Activated T-helper 1 cell treated with anti-CD3 and anti-CD28 coated beads, Interleukin-12 subunit alpha, Interleukin-12 subunit beta, Interleukin-2, Interleukin-4 antibody, amounts not matched to agents 30 ng/mL and 10 ng/mL and 1 ng/mL, durations not matched to agents 14 hours and 24 hours and 36 hours (primary cell): ENCODE measurements at regions of chr15 and their contacts with region 1.

Region 1: DNA sequence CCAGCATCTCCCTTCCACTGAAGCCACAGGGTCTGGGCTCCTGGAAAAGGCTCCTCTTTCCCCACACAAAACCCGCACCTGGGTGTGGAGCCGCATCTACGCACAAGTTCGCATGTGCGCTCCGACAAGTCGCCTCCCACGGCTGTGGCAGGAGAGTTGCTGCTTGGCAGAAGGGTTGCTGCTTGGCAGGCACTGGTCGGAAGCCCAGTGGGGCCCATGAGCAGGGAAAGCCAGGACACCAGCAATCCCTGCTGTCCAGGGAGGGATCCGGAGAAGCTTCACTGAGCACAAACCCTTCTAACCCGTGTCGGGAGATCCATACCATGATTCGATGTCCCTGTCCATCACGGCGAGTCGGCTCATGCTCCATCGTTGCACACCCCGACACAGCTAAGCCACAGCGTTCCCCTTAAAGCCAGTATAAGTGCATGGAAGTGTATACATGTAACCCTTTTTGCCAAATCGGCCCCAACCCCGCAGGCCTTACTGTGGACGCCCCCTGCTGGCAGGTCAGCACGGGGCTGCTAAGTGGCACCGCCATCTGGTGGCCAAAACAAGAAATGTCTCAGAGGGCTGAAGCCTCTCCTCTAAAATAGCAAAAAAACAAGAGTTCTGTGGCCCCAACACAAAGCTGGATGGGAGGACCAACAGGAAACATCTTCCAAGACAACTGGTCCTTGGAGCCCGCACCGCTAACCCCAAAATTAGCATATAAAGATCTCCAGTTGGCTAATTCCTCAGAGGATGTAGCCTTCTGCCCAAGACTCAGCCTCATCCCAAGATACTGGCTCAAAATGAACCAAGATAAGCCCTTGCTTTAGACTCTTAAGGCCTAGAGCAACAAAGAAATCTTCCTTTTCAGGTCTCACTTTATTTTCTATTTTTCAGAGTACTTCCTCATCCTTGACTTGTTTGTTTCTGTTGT is 8.3 kb downstream of the ANKRD63 start:
- DNase-seq: peak; percentile 83
- H3K4me3 Mint-ChIP-seq: no peak overlapping the region
- H3K27ac Mint-ChIP-seq: no peak overlapping the region
- H3K4me1 Mint-ChIP-seq: peaks cover 5% of the 10 kb centered on the region
- H3K27me3 Mint-ChIP-seq: peaks cover 31% of the 10 kb centered on the region

Region 2: GRCh38 chr15:39887832-39888231 is 386.8 kb before region 1 on chr15:
- intact Hi-C with region 1: loop called (anchors 5 kb)
- DNase-seq: no peak
- H3K4me3 Mint-ChIP-seq: no peak overlapping the region
- H3K27ac Mint-ChIP-seq: no peak overlapping the region
- H3K4me1 Mint-ChIP-seq: no peaks in the 10 kb centered on the region
- H3K27me3 Mint-ChIP-seq: peaks cover 13% of the 10 kb centered on the region

Region 3: GRCh38 chr15:40038638-40039543 is 235.7 kb before region 1 on chr15 and contains the start of gene SRP14:
- intact Hi-C with region 1: loop called (anchors 1 kb)
- DNase-seq: peak; percentile 88
- H3K4me3 Mint-ChIP-seq: peak within 1 kb of the TSS; percentile 100
- H3K27ac Mint-ChIP-seq: peak within 1 kb of the TSS; percentile 98
- H3K4me1 Mint-ChIP-seq: peaks cover 44% of the 10 kb centered on the region
- H3K27me3 Mint-ChIP-seq: no peaks in the 10 kb centered on the region
- total RNA-seq, gene SRP14: 144 and 147 TPM in 2 replicates

Region 4: DNA sequence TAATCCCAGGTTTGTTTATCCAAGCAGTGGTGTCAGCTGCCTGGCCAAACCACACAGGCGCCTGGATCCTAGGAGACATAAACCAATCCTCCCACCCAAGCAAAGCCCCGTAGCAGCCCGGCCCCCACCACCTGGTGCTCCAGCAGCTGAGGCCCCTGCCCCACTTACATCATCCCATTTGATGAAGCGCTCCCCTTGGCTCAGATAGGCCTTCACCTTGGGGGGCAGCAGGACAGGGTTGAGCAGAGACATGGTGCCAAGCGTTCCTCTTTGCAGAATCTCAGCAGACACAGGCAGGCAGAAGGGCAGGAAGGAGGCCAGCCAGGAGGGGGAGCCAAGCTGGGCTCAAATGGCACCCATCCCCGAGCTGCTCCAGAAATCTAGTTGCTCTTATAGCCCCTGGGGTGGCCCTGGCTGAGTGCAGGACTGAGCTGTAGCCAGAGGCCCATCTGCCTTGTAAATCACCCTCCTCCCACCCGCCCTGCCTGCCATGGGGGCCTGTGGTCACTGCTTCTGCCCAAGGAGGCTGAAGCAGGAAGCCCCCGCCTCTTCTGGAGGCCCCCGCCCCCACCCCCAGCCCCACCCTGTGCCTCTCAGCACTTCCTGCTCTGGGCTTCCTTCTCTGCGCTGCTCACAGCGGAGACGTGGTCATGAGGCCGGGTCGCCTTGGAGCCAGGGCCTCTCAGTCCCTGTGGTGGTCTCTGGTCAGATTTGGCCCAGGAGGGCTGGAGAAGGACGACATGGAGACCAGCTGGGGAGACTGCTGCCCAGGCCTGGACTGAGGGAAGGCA is 33.0 kb after region 1 on chr15 and contains the start of gene PLCB2:
- intact Hi-C with region 1: loop called (anchors 1 kb)
- DNase-seq: peak; percentile 62
- H3K4me3 Mint-ChIP-seq: peak within 1 kb of the TSS; percentile 92
- H3K27ac Mint-ChIP-seq: peak within 1 kb of the TSS; percentile 98
- H3K4me1 Mint-ChIP-seq: peaks cover 37% of the 10 kb centered on the region
- H3K27me3 Mint-ChIP-seq: peaks cover 16% of the 10 kb centered on the region
- total RNA-seq, gene PLCB2: 88.5 and 89.0 TPM in 2 replicates

Region 5: GRCh38 chr15:40421246-40422157 is 146.9 kb after region 1 on chr15:
- intact Hi-C with region 1: loop called (anchors 1 kb)
- DNase-seq: peak; percentile 72
- H3K4me3 Mint-ChIP-seq: no peak overlapping the region
- H3K27ac Mint-ChIP-seq: no peak overlapping the region
- H3K4me1 Mint-ChIP-seq: no peaks in the 10 kb centered on the region
- H3K27me3 Mint-ChIP-seq: no peaks in the 10 kb centered on the region